ENCODE measurements at regions of chr10 and their contacts with region 1.

Region 1: DNA sequence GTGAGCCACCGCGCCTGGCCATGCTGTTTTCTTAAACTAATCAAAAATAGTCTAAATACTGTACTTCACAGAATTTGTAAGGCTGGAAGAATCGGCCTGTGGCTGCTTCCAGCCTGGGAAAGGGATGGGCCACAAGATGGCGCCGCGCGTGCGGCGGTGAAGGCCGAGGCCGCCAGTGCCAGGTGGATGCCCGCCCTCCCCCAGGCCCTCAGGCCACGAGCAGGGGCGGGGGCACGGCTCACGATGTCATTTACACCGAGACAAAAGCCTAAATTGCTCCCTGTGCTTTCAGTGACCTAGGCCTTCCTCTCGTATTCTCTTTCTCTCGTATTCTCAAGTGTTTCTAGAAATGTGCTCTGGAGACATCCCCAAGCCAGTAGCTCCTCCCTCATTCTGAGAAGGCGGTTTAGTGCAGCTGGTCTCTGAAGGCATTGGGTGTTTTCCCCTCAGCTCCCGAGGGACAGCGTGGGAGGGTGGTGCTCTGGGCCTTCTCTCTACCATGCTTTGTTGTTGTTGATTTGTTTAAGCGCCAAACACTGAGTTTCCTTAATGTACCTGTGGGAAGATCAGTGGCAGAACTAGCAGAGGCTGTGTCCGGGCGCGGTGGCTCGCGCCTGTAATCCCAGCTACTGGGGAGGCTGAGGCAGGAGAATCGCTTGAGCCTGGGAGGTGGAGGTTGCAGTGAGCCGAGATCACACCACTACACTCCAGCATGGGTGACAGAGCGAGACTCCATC is 68.4 kb downstream of the CDC123 start:
- DNase-seq: peak; percentile 49 to 85 (median 67)
- ATAC-seq: peak; percentile 82
- H3K4me3 ChIP-seq: peak overlapping the region; percentile 53
- H3K4me3 Mint-ChIP-seq: peak overlapping the region; percentile 71
- H3K27ac ChIP-seq: no peak overlapping the region
- H3K27ac Mint-ChIP-seq: peak overlapping the region; percentile 39
- H3K4me1 ChIP-seq: peaks cover 14% of the 10 kb centered on the region
- H3K4me1 Mint-ChIP-seq: peaks cover 14% of the 10 kb centered on the region
- H3K27me3 ChIP-seq: no peaks in the 10 kb centered on the region
- H3K27me3 Mint-ChIP-seq: no peaks in the 10 kb centered on the region
- CTCF ChIP-seq: peak; percentile 93

Region 2: GRCh38 chr10:11975795-11976194 is 288.6 kb before region 1 on chr10:
- CTCF ChIA-PET with region 1: no interaction called
- POLR2A ChIA-PET with region 1: no interaction called
- intact Hi-C with region 1: no loop called
- DNase-seq: no peak
- ATAC-seq: no peak
- H3K4me3 ChIP-seq: no peak overlapping the region
- H3K4me3 Mint-ChIP-seq: no peak overlapping the region
- H3K27ac ChIP-seq: no peak overlapping the region
- H3K27ac Mint-ChIP-seq: no peak overlapping the region
- H3K4me1 ChIP-seq: no peaks in the 10 kb centered on the region
- H3K4me1 Mint-ChIP-seq: peaks cover 11% of the 10 kb centered on the region
- H3K27me3 ChIP-seq: no peaks in the 10 kb centered on the region
- H3K27me3 Mint-ChIP-seq: no peaks in the 10 kb centered on the region
- CTCF ChIP-seq: no peak

Region 3: GRCh38 chr10:12381536-12382156 is 117.3 kb after region 1 on chr10:
- CTCF ChIA-PET with region 1: no interaction called
- POLR2A ChIA-PET with region 1: no interaction called
- intact Hi-C with region 1: no loop called
- DNase-seq: no peak
- ATAC-seq: no peak
- H3K4me3 ChIP-seq: no peak overlapping the region
- H3K4me3 Mint-ChIP-seq: no peak overlapping the region
- H3K27ac ChIP-seq: no peak overlapping the region
- H3K27ac Mint-ChIP-seq: no peak overlapping the region
- H3K4me1 ChIP-seq: no peaks in the 10 kb centered on the region
- H3K4me1 Mint-ChIP-seq: peaks cover 21% of the 10 kb centered on the region
- H3K27me3 ChIP-seq: no peaks in the 10 kb centered on the region
- H3K27me3 Mint-ChIP-seq: no peaks in the 10 kb centered on the region
- CTCF ChIP-seq: no peak

Region 4: DNA sequence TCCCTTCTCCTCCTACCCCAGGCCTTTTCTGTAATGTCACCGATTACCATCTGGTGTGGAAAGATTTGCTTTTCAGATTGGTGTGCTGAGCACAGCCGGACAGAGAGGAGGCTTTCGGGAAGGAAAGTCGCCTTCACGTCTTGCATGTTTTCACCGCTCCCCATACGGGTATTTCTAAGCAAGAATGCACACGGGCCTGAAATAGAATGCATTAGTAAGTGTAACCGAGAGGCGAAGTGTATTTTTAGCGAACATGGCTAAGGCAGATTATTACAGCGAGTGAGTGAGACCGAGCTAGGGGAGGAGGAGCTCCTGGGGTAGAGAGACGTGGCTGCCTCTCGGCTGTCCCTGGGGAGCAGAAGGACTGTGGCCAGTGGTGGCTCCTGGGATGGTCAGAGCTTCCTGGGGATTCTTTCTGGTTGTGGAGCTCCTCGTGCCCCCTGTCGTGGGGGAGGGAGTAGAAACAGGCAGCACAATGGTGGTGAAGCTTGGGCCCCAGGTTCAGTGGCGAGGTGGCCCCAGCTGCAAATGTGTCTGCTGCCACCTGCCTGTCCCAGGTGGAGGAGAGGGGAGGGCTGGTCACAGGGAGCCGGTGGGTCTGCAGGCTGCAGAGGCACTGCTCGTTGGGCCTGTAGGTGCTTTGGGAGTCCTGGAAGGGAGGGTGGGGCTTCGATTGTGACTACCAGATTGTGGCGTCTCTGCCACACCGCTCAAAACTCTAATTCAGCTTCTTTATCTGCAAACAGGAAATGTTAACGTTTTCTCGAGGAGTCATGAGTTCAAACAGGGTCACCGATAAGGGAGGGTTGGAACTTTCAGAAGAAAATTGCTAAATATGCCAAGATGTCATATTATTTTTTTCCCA is 220.8 kb after region 1 on chr10:
- CTCF ChIA-PET with region 1: interaction called, 10 read pairs
- POLR2A ChIA-PET with region 1: no interaction called
- intact Hi-C with region 1: loop called (anchors 1 to 2 kb)
- DNase-seq: peak; percentile 9 to 62 (median 24)
- ATAC-seq: peak; percentile 79
- H3K4me3 ChIP-seq: no peak overlapping the region
- H3K4me3 Mint-ChIP-seq: peak overlapping the region; percentile 55
- H3K27ac ChIP-seq: no peak overlapping the region
- H3K27ac Mint-ChIP-seq: peak overlapping the region; percentile 75
- H3K4me1 ChIP-seq: peaks cover 15% of the 10 kb centered on the region
- H3K4me1 Mint-ChIP-seq: peaks cover 58% of the 10 kb centered on the region
- H3K27me3 ChIP-seq: no peaks in the 10 kb centered on the region
- H3K27me3 Mint-ChIP-seq: no peaks in the 10 kb centered on the region
- CTCF ChIP-seq: no peak

Region 5: GRCh38 chr10:12656518-12657142 is 392.3 kb after region 1 on chr10:
- CTCF ChIA-PET with region 1: interaction called, 41 read pairs
- POLR2A ChIA-PET with region 1: interaction called, 11 read pairs
- intact Hi-C with region 1: loop called (anchors 1 kb)
- DNase-seq: peak in 4 of 14 experiments; percentile 10 to 71 (median 70)
- ATAC-seq: peak; percentile 86
- H3K4me3 ChIP-seq: no peak overlapping the region
- H3K4me3 Mint-ChIP-seq: peak overlapping the region; percentile 23
- H3K27ac ChIP-seq: no peak overlapping the region
- H3K27ac Mint-ChIP-seq: no peak overlapping the region
- H3K4me1 ChIP-seq: peaks cover 4% of the 10 kb centered on the region
- H3K4me1 Mint-ChIP-seq: peaks cover 8% of the 10 kb centered on the region
- H3K27me3 ChIP-seq: no peaks in the 10 kb centered on the region
- H3K27me3 Mint-ChIP-seq: no peaks in the 10 kb centered on the region
- CTCF ChIP-seq: peak; percentile 75

Region 6: DNA sequence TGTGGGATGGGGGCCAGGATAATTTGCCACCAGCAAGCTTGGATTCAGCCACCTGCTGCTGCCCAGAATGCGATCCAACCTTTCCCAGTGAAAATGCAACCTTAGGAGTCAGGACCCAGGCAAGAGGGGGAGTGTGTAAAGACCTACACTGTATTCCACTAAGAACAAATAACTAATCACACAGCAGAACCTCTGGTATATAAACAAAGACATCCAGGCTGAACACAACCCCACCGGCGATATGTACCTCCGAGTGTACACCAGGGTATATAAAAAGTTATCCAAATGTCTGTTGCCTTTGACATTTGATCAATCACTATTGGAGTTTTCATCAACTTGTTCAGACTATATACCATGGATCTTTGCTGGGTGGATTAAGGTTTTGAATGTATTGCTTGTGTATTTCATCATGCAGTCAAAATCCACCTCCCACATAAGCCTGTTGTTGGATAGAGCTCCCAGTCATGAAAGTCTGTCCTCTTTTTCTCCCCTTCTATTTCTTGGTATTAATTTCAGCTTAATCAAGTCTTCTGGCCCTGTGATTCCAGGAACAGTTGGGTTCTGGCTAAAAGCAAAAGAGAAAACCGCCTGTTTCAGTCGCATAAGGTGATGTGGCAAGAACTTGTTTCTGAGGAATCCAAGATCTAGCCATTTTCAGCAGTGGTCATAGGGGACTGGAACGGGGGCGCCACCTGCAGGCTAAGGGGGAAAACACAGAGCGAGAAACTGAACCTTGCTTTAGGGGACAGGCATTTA is 446.4 kb after region 1 on chr10:
- CTCF ChIA-PET with region 1: interaction called, 14 read pairs
- POLR2A ChIA-PET with region 1: interaction called, 3 read pairs
- intact Hi-C with region 1: loop called (anchors 1 kb)
- DNase-seq: peak; percentile 50 to 83 (median 68)
- ATAC-seq: peak; percentile 92
- H3K4me3 ChIP-seq: no peak overlapping the region
- H3K4me3 Mint-ChIP-seq: no peak overlapping the region
- H3K27ac ChIP-seq: no peak overlapping the region
- H3K27ac Mint-ChIP-seq: no peak overlapping the region
- H3K4me1 ChIP-seq: no peaks in the 10 kb centered on the region
- H3K4me1 Mint-ChIP-seq: peaks cover 14% of the 10 kb centered on the region
- H3K27me3 ChIP-seq: no peaks in the 10 kb centered on the region
- H3K27me3 Mint-ChIP-seq: no peaks in the 10 kb centered on the region
- CTCF ChIP-seq: peak; percentile 96

Region 7: DNA sequence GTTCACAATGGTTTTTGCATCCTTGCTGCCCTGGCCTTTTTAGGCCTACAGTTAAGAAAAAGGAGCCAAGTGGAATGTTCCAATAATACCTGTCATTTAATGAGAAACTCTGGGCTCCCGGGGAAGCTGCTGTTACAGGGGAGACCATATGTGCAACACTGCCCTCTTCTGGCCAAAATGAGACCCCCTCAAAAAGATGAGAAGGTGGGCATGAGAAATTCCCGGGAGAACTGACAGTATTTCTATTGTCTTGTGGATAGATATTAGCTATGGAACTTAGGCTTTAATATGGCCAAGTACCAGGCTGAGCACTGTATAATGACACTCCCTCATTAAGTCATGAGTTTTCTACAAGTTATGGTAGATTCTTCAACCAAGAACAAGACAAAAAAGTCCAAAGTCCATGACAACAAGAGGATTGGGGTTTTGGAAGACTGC is 637.8 kb after region 1 on chr10:
- CTCF ChIA-PET with region 1: no interaction called
- POLR2A ChIA-PET with region 1: interaction called, 3 read pairs
- intact Hi-C with region 1: loop called in 1 of 2 experiments (anchors 1 kb)
- DNase-seq: peak in 13 of 14 experiments; percentile 3 to 68 (median 22)
- ATAC-seq: no peak
- H3K4me3 ChIP-seq: no peak overlapping the region
- H3K4me3 Mint-ChIP-seq: no peak overlapping the region
- H3K27ac ChIP-seq: no peak overlapping the region
- H3K27ac Mint-ChIP-seq: no peak overlapping the region
- H3K4me1 ChIP-seq: no peaks in the 10 kb centered on the region
- H3K4me1 Mint-ChIP-seq: no peaks in the 10 kb centered on the region
- H3K27me3 ChIP-seq: peaks cover 0 to 2% of the 10 kb centered on the region in 2 experiments
- H3K27me3 Mint-ChIP-seq: peaks cover 20% of the 10 kb centered on the region
- CTCF ChIP-seq: peak; percentile 75